ENCODE measurements at regions of chr10 and their contacts with region 1.

Region 1: DNA sequence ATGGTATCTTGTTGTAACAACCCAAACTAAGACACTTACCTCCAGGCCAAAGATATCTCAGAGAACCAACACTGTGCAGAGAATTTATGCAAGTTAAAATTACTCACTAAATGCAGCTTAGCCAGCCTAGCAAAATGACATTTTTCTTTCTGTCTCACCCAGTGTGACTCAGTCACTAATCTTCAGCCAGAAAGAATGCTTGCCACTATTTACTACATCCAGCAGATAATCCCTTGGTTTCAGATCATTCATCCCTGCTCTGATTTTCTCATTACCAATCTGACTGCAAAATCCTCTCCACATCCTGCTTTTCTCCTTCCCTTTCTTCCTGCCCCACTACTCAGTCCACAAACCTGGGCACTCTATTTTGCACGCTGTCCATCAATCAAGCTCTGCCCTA is 93.5 kb upstream of the NEBL start:
- DNase-seq: no peak
- H3K4me3 ChIP-seq: no peak overlapping the region
- H3K27ac ChIP-seq: no peak overlapping the region
- H3K4me1 ChIP-seq: no peaks in the 10 kb centered on the region
- H3K27me3 ChIP-seq: no peaks in the 10 kb centered on the region
- CTCF ChIP-seq: no peak
- POLR2A ChIP-seq: no peak

Region 2: GRCh38 chr10:20659225-20659624 is 331.4 kb before region 1 on chr10:
- intact Hi-C with region 1: loop called (anchors 5 kb)
- DNase-seq: no peak
- H3K4me3 ChIP-seq: no peak overlapping the region
- H3K27ac ChIP-seq: no peak overlapping the region
- H3K4me1 ChIP-seq: no peaks in the 10 kb centered on the region
- H3K27me3 ChIP-seq: no peaks in the 10 kb centered on the region
- CTCF ChIP-seq: no peak
- POLR2A ChIP-seq: no peak

Region 3: DNA sequence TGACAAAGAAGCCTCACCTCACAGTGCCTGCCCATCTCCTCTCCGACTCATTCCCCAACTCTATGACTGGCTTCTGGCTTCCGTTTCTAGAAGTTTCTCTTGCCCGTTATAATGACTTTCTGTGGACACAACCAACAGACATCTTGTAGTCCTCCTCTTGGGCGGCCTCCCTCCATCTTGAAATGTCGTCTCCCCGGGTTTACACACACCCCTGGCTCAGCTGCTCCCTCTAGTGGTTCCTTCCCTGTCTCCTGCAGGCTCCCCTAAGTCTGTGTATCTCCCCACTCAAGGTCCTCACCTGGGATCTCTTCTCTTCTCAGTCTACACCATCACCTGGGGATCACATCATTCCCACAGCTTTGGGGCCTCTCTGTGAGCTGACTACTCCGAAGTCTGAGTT is 29.9 kb after region 1 on chr10:
- intact Hi-C with region 1: loop called (anchors 2 kb)
- DNase-seq: no peak
- H3K4me3 ChIP-seq: no peak overlapping the region
- H3K27ac ChIP-seq: no peak overlapping the region
- H3K4me1 ChIP-seq: no peaks in the 10 kb centered on the region
- H3K27me3 ChIP-seq: no peaks in the 10 kb centered on the region
- CTCF ChIP-seq: no peak
- POLR2A ChIP-seq: no peak